T-cell (primary cell): ENCODE measurements at regions of chr6 and their contacts with region 1.

Region 1: GRCh38 chr6:36580184-36580526 is 14.0 kb upstream of the SRSF3 start:
- DNase-seq: no peak
- ATAC-seq: no peak
- H3K4me3 ChIP-seq: no peak overlapping the region
- H3K4me3 Mint-ChIP-seq: no peak overlapping the region
- H3K27ac ChIP-seq: no peak overlapping the region
- H3K27ac Mint-ChIP-seq: no peak overlapping the region
- H3K4me1 ChIP-seq: no peaks in the 10 kb centered on the region
- H3K4me1 Mint-ChIP-seq: peaks cover 6 to 12% (median 7%) of the 10 kb centered on the region in 3 donors
- H3K27me3 ChIP-seq: no peaks in the 10 kb centered on the region
- H3K27me3 Mint-ChIP-seq: no peaks in the 10 kb centered on the region

Region 2: DNA sequence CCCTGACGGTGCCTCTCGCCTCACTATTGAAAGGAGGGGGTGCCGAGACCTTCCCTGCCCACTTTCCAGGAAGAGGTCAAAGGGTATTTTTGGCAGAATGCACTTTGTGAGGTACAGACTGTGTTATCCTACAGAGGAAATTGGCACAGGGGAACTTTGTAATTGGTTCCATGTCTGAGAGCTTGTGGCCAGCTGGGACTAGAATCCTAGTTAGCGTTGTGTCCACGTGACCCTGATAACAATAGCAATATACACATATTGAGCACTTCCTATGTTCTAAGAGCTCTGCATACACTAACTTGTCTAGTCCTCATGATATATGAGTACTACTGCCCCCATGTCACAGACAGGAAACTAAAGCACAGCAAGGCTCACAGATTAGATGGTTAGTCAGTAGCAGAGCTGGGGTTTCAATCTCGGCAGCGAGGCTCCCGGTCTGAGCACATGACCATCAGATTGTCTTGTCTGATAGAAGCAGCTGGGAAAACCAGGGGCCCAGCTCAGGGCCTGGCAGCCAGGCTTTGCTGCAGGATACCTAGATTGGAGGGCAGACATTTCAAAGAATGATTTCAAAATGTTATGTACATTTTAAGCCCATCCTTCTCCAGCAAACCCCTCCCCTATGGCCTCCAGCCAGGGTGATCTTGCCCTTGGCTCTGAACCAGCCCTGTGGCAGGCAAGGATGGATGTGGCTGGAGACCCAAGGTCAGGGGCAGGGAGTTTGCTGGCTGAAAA is 448.5 kb before region 1 on chr6:
- CTCF ChIA-PET with region 1: no interaction called
- POLR2A ChIA-PET with region 1: no interaction called
- DNase-seq: peak in 16 of 35 experiments; percentile 10 to 70 (median 30)
- ATAC-seq: peak; percentile 74 to 76 (median 76)
- H3K4me3 ChIP-seq: peak overlapping the region in 1 of 2 donors; percentile 62
- H3K4me3 Mint-ChIP-seq: peak overlapping the region; percentile 81 to 89 (median 83)
- H3K27ac ChIP-seq: peak overlapping the region; percentile 79
- H3K27ac Mint-ChIP-seq: peak overlapping the region; percentile 94
- H3K4me1 ChIP-seq: peaks cover 6 to 53% of the 10 kb centered on the region in 2 experiments
- H3K4me1 Mint-ChIP-seq: peaks cover 45 to 64% (median 52%) of the 10 kb centered on the region in 3 donors
- H3K27me3 ChIP-seq: no peaks in the 10 kb centered on the region
- H3K27me3 Mint-ChIP-seq: no peaks in the 10 kb centered on the region

Region 3: DNA sequence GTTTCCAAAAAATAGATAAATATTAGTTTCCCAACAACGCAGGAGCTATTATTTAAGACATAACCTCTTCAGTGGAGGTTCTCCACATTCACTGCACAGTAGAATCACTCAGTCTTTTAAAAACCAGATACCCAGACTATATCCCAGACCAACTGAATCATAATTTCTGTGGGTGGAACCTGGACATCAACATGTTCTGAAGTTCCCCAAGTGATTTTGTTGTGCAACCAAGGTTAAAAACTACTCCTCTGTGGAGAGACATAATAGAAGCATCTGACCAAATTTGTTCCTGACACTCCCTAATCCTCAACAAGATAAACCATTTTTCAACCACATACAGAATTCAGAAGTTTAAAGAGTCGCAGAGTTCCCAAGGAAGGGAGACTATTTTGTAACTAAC is 75.2 kb before region 1 on chr6:
- CTCF ChIA-PET with region 1: interaction called in 1 of 2 experiments, 10 read pairs
- POLR2A ChIA-PET with region 1: no interaction called
- DNase-seq: no peak
- ATAC-seq: no peak
- H3K4me3 ChIP-seq: no peak overlapping the region
- H3K4me3 Mint-ChIP-seq: no peak overlapping the region
- H3K27ac ChIP-seq: no peak overlapping the region
- H3K27ac Mint-ChIP-seq: peak overlapping the region; percentile 69 to 72
- H3K4me1 ChIP-seq: peaks cover 8 to 16% of the 10 kb centered on the region in 2 experiments
- H3K4me1 Mint-ChIP-seq: peaks cover 38 to 58% (median 49%) of the 10 kb centered on the region in 3 donors
- H3K27me3 ChIP-seq: no peaks in the 10 kb centered on the region
- H3K27me3 Mint-ChIP-seq: no peaks in the 10 kb centered on the region

Region 4: DNA sequence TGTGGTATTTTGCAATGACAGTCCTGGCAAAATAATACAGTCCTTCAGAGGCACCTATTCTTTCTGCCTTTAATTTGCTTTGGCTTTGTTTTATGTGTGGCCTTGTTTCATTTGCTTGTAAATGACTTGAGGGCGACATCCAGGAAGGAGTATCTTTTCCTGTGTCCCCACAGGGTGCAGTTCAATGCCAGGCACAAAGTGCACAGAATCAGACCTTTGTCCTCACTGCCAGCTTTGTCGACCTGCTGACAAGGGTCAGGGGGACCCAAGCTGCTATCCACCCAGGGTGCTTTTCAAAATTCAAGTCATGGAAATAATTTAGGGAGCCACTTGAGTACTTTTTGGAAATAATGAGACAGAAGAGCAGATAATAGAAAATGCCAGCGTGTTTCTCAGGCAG is 61.4 kb after region 1 on chr6:
- CTCF ChIA-PET with region 1: interaction called, 3 to 13 read pairs
- POLR2A ChIA-PET with region 1: no interaction called
- DNase-seq: no peak
- ATAC-seq: no peak
- H3K4me3 ChIP-seq: no peak overlapping the region
- H3K4me3 Mint-ChIP-seq: no peak overlapping the region
- H3K27ac ChIP-seq: no peak overlapping the region
- H3K27ac Mint-ChIP-seq: no peak overlapping the region
- H3K4me1 ChIP-seq: no peaks in the 10 kb centered on the region
- H3K4me1 Mint-ChIP-seq: no peaks in the 10 kb centered on the region
- H3K27me3 ChIP-seq: peaks cover 0 to 13% of the 10 kb centered on the region in 2 experiments
- H3K27me3 Mint-ChIP-seq: peaks cover 0 to 2% of the 10 kb centered on the region in 2 donors